ENCODE measurements at regions of chr17 and their contacts with region 1.

Region 1: DNA sequence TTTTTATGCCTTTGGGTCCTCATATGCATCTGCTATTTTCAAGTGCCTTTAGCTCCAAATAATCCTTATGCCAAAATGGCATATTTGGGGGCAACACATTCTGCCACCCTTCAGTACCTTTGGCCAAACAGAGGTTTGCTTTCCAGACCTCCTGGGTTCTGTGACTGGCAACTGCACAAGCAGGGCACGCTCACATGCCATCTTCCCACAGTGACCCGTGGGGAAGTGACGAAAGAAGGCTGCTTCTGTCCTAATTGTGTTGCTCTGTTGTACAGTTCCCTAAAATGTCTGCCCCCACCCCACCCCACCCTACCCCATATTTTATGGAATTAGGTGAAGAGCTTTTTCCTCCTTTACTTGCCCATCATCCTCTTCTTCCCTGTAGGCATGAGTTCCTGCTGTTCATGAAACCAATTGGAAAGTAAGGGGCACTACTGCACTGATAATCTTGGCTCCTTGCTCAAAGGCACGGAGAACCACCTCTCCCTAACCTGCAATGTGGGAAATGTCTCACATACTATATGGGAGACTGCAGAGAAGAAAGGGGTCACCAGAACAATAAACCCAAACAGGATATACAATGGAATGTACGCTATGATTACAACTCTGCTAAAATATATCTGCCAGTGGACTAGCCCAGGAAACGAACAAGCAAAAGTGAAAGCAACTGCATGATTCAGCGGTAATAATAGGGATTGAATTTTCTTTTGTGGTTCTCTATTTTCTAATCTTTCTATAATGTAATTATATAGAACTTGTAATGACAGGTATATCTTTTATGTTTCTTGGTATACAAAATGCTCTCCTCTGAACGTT is 3.3 kb upstream of the SLFN12L start:
- DNase-seq: peak; percentile 36
- H3K4me3 ChIP-seq: peak overlapping the region; percentile 22
- H3K27ac ChIP-seq: peak overlapping the region; percentile 55
- H3K27me3 ChIP-seq: no peaks in the 10 kb centered on the region
- CTCF ChIP-seq: no peak

Region 2: GRCh38 chr17:35312790-35313711 is 227.7 kb before region 1 on chr17:
- in situ Hi-C with region 1: loop called (anchors 25 kb)
- DNase-seq: peak; percentile 49
- H3K4me3 ChIP-seq: peak overlapping the region; percentile 27
- H3K27ac ChIP-seq: no peak overlapping the region
- H3K27me3 ChIP-seq: no peaks in the 10 kb centered on the region
- CTCF ChIP-seq: peak; percentile 84

Region 3: DNA sequence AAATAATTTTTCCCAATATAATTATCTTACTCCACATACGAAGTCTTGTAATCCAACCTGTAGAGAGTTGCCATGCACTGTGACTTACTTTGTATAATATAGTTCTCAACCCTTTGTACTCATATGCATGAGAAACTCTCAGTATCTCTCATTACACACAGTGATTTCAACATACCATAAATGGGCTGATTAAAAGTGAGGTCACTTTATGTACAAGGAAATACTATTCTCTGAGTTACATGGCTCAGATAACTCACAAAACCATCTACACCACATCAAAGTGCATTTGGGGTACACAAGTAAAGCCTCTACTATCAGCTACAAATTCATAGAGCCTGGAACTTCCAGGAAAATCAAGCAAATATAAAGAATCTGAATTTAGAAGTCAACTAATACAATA is 136.4 kb before region 1 on chr17:
- in situ Hi-C with region 1: no loop called
- DNase-seq: no peak
- H3K4me3 ChIP-seq: no peak overlapping the region
- H3K27ac ChIP-seq: no peak overlapping the region
- H3K27me3 ChIP-seq: no peaks in the 10 kb centered on the region
- CTCF ChIP-seq: no peak

Region 4: GRCh38 chr17:35432176-35433074 is 108.4 kb before region 1 on chr17 and contains the start of gene SLFN12:
- in situ Hi-C with region 1: no loop called
- DNase-seq: peak; percentile 95
- H3K4me3 ChIP-seq: peak within 1 kb of the TSS; percentile 69
- H3K27ac ChIP-seq: peak within 1 kb of the TSS; percentile 75
- H3K27me3 ChIP-seq: no peaks in the 10 kb centered on the region
- CTCF ChIP-seq: no peak